Lower leg skin (tissue), 4 donors: ENCODE measurements at regions of chr16 and their contacts with region 1.

Region 1: DNA sequence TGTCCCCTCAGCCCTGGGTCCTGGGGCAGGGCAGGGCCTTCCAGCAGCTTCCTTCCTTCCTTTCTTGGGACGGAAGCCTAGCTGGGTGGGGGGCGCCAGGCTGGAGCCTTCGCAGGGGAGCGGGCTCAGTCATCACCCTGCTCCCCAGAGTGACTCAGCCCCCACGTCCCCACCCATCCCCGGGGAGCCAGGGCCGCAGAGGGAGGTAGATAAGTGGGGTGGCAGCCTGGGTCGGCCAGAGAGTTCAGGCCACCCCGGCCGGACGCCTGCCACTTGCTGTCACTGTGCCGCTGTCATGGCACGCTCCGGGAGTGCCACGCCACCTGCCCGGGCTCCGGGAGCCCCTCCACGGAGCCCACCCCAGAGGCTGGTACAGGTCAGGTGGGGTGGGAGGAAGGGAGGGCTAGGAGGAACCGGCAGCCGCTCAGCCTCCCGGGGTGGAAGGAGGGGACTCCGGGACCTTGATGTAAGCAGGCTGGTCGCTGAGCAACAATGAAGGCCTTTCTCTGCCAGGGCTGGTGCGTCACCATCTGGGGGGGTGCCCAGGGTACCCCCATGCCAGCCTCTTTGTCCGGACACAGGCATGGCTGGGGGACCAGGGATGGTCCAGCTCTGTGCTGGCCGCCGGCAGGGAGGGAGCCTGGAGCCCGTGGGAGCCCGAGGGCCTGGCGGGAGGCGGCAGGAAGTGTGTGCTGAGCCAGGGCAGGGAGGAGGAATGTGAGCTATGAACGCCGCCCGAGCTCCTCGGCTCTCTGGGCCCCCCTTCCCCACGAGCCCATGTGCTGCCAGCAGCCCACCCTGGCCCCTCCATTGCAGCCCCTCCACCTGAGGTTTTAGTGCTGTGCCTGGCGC is 6.6 kb downstream of the NHERF2 start:
- DNase-seq: no peak
- H3K4me3 ChIP-seq: no peak overlapping the region
- CTCF ChIP-seq: no peak
- POLR2A ChIP-seq: no peak

Region 2: DNA sequence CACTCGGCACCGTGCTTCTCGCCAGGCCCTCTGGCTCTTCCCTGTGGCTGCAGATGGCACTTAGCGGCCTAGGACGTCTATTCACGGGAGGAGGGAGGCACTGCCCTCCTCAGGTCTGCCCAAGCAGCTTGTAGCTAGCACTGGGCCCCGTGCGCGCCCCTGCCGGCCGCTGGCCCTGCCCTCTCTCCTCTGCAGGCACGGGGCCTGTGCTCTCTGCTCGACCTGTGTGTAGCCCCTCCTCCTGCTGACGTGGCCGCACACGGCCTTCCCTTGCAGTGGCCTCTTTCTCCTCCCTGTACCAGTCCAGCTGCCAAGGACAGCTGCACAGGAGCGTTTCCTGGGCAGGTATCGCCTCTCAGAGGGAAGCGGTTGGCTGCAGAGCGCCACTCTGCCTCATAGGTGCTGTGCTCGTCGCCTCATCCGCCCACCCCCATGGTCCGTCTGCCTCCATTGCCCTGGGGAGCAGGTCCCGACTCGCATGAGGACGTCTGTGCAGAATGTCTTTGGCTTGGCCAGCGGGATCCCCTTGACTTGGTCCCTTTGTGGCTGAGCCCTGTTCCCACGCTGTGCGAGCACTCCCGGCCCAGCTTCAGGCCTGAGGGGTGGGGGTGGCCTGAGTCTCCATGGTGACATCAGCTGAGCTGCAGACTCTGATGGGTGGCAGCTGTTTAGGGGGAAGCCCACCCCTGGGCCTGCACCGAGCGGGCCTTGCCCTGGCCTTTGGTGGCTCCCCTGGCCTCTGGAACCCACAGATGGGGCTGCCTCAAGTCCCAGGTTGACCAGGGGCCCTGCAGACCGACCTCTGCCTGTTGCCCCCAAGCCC is 49.1 kb after region 1 on chr16:
- intact Hi-C with region 1: loop called (anchors 10 kb)
- DNase-seq: no peak
- H3K4me3 ChIP-seq: no peak overlapping the region
- CTCF ChIP-seq: no peak
- POLR2A ChIP-seq: no peak

Region 3: GRCh38 chr16:2278272-2278608 is 245.0 kb after region 1 on chr16:
- intact Hi-C with region 1: no loop called
- DNase-seq: no peak
- H3K4me3 ChIP-seq: no peak overlapping the region
- CTCF ChIP-seq: no peak
- POLR2A ChIP-seq: no peak